Cardiac septum (tissue), 1 donor: ENCODE measurements at regions of chr1 and their contacts with region 1.

Region 1: GRCh38 chr1:7667625-7668218 is 103.4 kb upstream of the VAMP3 start:
- DNase-seq: peak; percentile 90

Region 2: DNA sequence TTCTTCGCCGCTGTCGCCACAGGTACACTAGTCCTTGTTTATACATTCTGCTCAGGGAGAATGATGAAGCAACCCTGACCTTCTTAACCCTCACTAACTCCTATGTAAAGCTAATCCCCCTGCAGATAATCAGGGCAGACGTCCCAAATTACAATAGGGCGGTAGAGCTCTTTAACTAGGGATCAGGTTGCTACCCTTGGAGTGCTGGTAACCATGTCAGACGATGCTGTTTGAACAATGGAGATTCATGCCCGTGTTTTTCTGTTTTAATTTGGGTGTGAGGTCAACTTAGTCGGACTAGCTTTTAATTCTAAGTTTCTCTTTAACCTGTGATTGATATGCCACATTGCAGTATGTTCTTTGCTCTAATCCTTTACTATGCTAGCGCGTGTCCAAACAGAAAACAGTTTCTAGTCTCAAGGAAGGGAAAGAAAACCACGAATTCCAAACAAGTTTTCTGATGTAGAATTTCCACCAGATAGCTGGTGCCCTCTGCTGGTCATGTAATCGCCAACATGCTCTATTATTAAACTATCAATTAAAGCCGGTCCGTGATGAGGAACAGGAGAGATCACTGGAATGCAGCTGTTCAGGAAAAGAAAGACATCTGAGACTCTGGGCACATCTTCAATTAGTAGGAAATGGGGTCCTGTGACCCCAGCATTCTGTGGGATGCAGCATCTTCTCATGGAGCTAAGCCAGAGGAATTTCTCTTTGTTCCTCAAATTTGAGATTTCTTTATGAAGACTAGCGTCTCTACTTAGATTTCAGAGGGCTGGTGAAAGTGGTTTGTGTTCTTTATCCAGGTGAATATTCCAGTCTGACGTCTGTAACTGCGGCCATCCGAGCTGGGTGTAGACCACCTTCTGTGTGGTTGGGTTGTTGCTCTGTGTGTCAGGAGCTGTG is 85.0 kb after region 1 on chr1:
- intact Hi-C with region 1: loop called (anchors 1 kb)
- DNase-seq: no peak

Region 3: GRCh38 chr1:7902478-7903085 is 234.9 kb after region 1 on chr1:
- intact Hi-C with region 1: loop called (anchors 10 kb)
- DNase-seq: peak; percentile 81